Mammary epithelial cell (primary cell): ENCODE measurements at regions of chr7 and their contacts with region 1.

Region 1: DNA sequence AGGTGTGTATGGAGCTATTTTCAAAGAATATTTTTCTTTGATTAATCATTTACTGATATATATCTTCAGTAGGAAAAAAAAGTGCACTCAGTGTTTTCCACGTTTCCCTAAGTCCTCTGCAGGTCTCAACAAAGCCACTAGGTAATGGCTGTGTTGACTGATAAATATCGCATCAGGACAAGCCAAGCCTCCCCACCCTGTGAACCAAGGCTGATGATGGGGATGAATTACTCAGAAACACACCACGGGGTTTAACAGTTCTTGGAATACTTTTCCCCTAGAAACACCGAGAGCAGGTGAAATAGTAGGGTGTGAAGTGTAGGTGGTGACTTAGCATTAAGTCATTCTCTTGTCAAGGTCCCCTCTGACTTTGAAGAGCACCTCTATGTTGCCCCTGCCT is 423.5 kb upstream of the IGFBP3 start:
- DNase-seq: peak; percentile 5
- H3K4me3 ChIP-seq: no peak overlapping the region
- H3K27ac ChIP-seq: no peak overlapping the region
- H3K4me1 ChIP-seq: no peaks in the 10 kb centered on the region
- H3K27me3 ChIP-seq: no peaks in the 10 kb centered on the region
- CTCF ChIP-seq: no peak

Region 2: DNA sequence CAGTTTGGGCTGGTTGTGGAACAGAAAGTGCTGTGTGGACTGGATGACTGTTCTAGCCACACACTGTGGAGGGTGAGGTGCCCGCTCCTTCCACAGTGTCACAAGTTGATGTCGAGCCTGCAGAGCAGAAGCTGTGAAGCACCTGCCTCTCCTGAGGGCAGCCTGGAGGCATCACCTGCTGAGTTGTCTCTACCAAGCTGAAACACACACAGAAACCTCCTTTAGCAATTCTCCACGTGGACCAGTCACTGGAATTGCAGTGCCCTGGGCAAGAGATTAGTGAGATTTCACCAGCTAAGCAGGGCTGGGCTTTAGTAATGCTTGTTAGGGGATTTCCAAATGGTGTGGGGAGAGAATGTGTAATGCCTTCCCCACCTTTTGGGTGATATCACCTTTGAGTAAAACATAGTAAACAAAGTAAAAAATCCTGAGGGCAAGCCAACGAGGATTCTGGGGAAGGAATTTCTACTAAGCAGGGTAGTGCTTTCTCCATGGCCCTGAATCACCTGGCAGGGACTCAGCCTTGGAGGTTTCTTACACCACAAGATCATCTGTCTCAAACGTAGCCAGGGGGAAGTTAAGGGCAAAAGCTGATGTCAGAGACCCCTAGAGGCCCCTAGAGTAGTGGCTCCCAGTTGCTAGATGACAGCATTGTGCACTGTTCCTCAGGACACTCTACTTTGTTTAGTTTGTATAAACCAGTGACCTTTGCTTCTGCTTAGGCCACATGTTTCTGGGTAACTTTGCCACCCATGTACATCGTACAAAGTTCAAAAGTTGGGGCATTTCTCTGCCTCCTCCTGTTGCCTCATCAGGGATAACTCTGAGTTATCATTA is 190.4 kb before region 1 on chr7:
- CTCF ChIA-PET with region 1: no interaction called
- dilution Hi-C with region 1: no loop called
- in situ Hi-C with region 1: loop called in 1 of 2 experiments (anchors 25 kb)
- intact Hi-C with region 1: loop called (anchors 5 kb)
- DNase-seq: peak; percentile 99
- H3K4me3 ChIP-seq: no peak overlapping the region
- H3K27ac ChIP-seq: peak overlapping the region; percentile 52
- H3K4me1 ChIP-seq: peaks cover 12% of the 10 kb centered on the region
- H3K27me3 ChIP-seq: no peaks in the 10 kb centered on the region
- CTCF ChIP-seq: no peak

Region 3: DNA sequence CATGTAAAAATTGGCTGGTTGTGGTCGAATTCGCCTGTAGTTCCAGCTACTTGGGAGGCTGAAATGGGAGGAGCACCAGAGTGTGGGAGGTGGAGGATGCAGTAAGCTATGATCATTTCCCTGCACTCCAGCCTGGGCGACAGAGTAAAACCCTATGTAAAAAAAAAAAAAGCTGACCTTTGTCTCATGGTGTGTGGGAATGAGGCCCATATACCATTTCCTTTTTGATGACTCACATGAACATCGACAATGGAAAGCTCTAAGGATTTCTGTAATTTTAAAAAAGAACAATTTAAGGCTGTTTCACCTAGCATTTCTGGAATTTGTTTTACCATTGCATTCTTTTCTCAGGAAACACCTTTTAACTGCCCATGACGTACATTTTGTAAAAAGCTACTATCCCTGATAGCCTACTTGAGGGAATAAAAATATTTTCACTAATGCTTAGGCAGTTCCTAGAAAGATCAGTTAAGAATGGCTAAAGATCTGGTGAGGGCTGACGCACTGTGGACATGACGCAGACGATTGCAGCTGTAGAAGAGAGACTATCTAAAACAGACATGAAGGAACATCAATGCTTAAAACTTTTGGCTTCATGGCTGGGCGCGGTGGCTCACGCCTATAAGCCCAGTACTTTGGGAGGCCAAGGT is 22.8 kb before region 1 on chr7:
- CTCF ChIA-PET with region 1: no interaction called
- dilution Hi-C with region 1: no loop called
- in situ Hi-C with region 1: no loop called
- intact Hi-C with region 1: no loop called
- DNase-seq: no peak
- H3K4me3 ChIP-seq: no peak overlapping the region
- H3K27ac ChIP-seq: no peak overlapping the region
- H3K4me1 ChIP-seq: no peaks in the 10 kb centered on the region
- H3K27me3 ChIP-seq: no peaks in the 10 kb centered on the region
- CTCF ChIP-seq: no peak